K562 (cell line): ENCODE measurements at regions of chr9 and their contacts with region 1.

Region 1: GRCh38 chr9:105157130-105157583 is 87.3 kb upstream of the SLC44A1 start:
- DNase-seq: peak in 2 of 4 experiments; percentile 14 to 21
- ATAC-seq: peak; percentile 80
- H3K4me3 ChIP-seq: no peak overlapping the region
- H3K27ac ChIP-seq: no peak overlapping the region
- H3K4me1 ChIP-seq: no peaks in the 10 kb centered on the region
- H3K27me3 ChIP-seq: no peaks in the 10 kb centered on the region
- CTCF ChIP-seq: peak; percentile 26 to 49 (median 48); a peak in 2 of 6 replicates
- EP300 ChIP-seq: no peak
- POLR2A ChIP-seq: no peak
- RAD21 ChIP-seq: peak; percentile 76 to 79

Region 2: GRCh38 chr9:104863180-104863883 is 293.8 kb before region 1 on chr9:
- CTCF ChIA-PET with region 1: interaction called, 4 read pairs
- POLR2A ChIA-PET with region 1: no interaction called
- in situ Hi-C with region 1: loop called (anchors 5 kb)
- intact Hi-C with region 1: loop called (anchors 1 kb)
- DNase-seq: peak; percentile 39 to 70 (median 50)
- ATAC-seq: peak; percentile 96
- H3K4me3 ChIP-seq: no peak overlapping the region
- H3K27ac ChIP-seq: no peak overlapping the region
- H3K4me1 ChIP-seq: peaks cover 0 to under 1% of the 10 kb centered on the region in 2 experiments; a peak in 1 of 5 replicates
- H3K27me3 ChIP-seq: peaks cover 2 to 20% of the 10 kb centered on the region in 2 experiments; a peak in 2 of 5 replicates
- CTCF ChIP-seq: peak; percentile 61 to 82 (median 75)
- EP300 ChIP-seq: no peak
- POLR2A ChIP-seq: no peak
- RAD21 ChIP-seq: peak; percentile 82 to 85

Region 3: GRCh38 chr9:104927912-104928740 is 229.0 kb before region 1 on chr9 and contains the start of gene ABCA1:
- CTCF ChIA-PET with region 1: no interaction called
- POLR2A ChIA-PET with region 1: no interaction called
- in situ Hi-C with region 1: no loop called
- intact Hi-C with region 1: loop called (anchors 5 kb)
- DNase-seq: peak; percentile 32 to 48 (median 35)
- ATAC-seq: peak; percentile 69
- H3K4me3 ChIP-seq: no peak within 1 kb of the TSS
- H3K27ac ChIP-seq: no peak within 1 kb of the TSS
- H3K4me1 ChIP-seq: peaks cover 0 to 16% of the 10 kb centered on the region in 2 experiments; a peak in 2 of 5 replicates
- H3K27me3 ChIP-seq: peaks cover 3 to 32% of the 10 kb centered on the region in 2 experiments; a peak in 3 of 5 replicates
- CTCF ChIP-seq: no peak
- EP300 ChIP-seq: no peak
- POLR2A ChIP-seq: no peak
- RAD21 ChIP-seq: no peak
- polyA plus RNA-seq, gene ABCA1: under 0.01 to 0.01 TPM

Region 4: GRCh38 chr9:105116052-105116868 is 40.9 kb before region 1 on chr9:
- CTCF ChIA-PET with region 1: no interaction called
- POLR2A ChIA-PET with region 1: no interaction called
- in situ Hi-C with region 1: no loop called
- intact Hi-C with region 1: no loop called
- DNase-seq: no peak
- ATAC-seq: no peak
- H3K4me3 ChIP-seq: no peak overlapping the region
- H3K27ac ChIP-seq: no peak overlapping the region
- H3K4me1 ChIP-seq: no peaks in the 10 kb centered on the region
- H3K27me3 ChIP-seq: peaks cover 0 to 7% of the 10 kb centered on the region in 2 experiments; a peak in 2 of 5 replicates
- CTCF ChIP-seq: no peak
- EP300 ChIP-seq: no peak
- POLR2A ChIP-seq: no peak
- RAD21 ChIP-seq: no peak